ENCODE measurements at regions of chr22 and their contacts with region 1.

Region 1: GRCh38 chr22:50244420-50245213 is at the start of gene TUBGCP6:
- DNase-seq: peak; percentile 77 to 96 (median 91)
- ATAC-seq: peak; percentile 77
- H3K4me3 ChIP-seq: peak within 1 kb of the TSS; percentile 99
- H3K4me3 Mint-ChIP-seq: peak within 1 kb of the TSS; percentile 100
- H3K27ac ChIP-seq: peak within 1 kb of the TSS; percentile 94 to 99
- H3K27ac Mint-ChIP-seq: peak within 1 kb of the TSS; percentile 100
- H3K4me1 ChIP-seq: peaks cover 56% of the 10 kb centered on the region
- H3K4me1 Mint-ChIP-seq: peaks cover 51% of the 10 kb centered on the region
- H3K27me3 ChIP-seq: no peaks in the 10 kb centered on the region
- H3K27me3 Mint-ChIP-seq: no peaks in the 10 kb centered on the region
- CTCF ChIP-seq: peak; percentile 27
- total RNA-seq, gene TUBGCP6: 121 to 122 TPM

Region 2: DNA sequence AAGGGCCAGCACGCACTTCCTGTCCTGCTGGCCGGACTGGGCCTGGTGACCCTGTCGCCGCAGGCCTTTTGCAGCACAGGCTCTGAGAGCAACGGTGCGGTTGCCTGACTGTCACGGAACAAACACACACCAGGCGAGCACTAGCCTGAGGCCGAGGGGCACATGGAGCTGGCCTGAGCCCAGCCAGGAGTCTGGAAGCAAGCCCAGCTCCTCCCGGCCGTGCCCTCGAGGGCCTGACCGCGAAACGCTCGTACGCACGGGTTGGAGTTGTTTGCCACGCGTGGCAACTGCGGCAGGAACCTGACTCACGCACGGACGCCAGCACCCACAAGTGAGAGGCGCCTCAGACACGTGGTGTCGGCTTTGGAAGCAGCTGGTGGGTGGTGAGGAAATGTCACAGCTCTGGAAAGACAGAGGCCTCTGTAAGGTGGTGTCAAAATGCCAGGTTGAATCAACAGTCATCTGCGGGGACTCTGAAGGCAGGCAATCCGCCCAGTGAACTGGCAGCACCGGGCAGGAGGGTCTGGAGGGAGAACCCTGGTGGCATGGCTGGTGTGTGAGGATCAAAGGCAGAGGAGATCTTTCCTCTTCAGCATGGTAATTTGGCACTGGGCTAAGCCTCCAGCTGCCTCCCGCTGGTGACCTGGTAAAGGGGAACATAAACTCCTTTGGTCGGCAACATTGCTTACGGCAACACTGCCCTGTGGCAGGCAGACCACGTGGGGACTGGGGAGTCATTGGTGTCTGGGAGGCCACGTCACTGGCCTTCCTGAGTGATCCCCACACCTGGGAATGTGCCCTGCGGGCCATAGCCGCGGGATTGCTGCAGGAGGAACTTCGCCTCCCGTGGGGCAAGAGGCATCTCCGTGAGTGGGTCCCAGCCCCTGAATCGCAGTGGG is 216.7 kb before region 1 on chr22:
- CTCF ChIA-PET with region 1: no interaction called
- POLR2A ChIA-PET with region 1: no interaction called
- intact Hi-C with region 1: no loop called
- DNase-seq: peak in 4 of 9 experiments; percentile 54 to 78 (median 74)
- ATAC-seq: peak; percentile 58
- H3K4me3 ChIP-seq: no peak overlapping the region
- H3K4me3 Mint-ChIP-seq: no peak overlapping the region
- H3K27ac ChIP-seq: no peak overlapping the region
- H3K27ac Mint-ChIP-seq: no peak overlapping the region
- H3K4me1 ChIP-seq: peaks cover 8% of the 10 kb centered on the region
- H3K4me1 Mint-ChIP-seq: peaks cover 3% of the 10 kb centered on the region
- H3K27me3 ChIP-seq: peaks cover 0 to 5% of the 10 kb centered on the region in 2 experiments
- H3K27me3 Mint-ChIP-seq: peaks cover 3% of the 10 kb centered on the region
- CTCF ChIP-seq: no peak

Region 3: DNA sequence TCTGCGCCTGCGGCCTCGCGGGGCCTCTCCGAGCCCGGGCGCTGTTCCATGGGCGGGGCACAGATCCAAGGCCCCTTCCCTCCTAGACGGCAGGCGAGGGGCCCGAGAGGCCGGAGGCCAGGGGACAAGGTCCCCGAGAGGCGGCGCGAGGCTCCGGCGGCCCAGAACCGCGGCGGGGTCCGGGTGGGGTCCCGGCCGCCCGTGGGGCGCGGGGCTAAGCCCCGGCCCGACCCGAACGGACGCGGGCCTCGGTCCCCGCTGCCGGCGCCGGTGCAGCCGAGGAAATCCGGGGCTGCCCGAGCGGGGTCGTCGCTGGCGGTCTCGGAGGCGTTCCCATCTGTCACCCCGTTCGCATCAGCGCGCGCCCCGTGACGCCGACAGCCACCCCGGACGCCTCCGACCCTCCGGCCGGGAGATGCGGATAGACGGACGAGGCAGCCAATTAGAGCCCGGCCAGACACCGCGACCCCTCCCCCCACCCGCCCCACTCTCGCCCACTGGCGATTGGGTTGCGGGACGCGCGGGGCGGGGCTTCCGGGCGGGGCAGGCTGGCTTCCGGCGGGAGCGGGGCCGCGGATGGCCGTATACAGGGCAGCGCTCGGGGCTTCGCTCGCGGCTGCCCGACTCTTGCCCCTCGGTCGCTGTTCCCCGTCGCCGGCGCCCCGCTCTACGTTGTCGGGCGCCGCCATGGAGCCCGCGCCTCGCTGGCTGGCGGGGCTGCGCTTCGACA is 44.0 kb before region 1 on chr22 and contains the start of gene SELENOO:
- CTCF ChIA-PET with region 1: no interaction called
- POLR2A ChIA-PET with region 1: interaction called, 3 read pairs
- intact Hi-C with region 1: loop called in 1 of 2 experiments (anchors 2 kb)
- DNase-seq: peak; percentile 86 to 95 (median 91)
- ATAC-seq: peak; percentile 88
- H3K4me3 ChIP-seq: peak within 1 kb of the TSS; percentile 51 to 68
- H3K4me3 Mint-ChIP-seq: peak within 1 kb of the TSS; percentile 86
- H3K27ac ChIP-seq: peak within 1 kb of the TSS; percentile 60 to 77
- H3K27ac Mint-ChIP-seq: peak within 1 kb of the TSS; percentile 84
- H3K4me1 ChIP-seq: peaks cover 17% of the 10 kb centered on the region
- H3K4me1 Mint-ChIP-seq: peaks cover 24% of the 10 kb centered on the region
- H3K27me3 ChIP-seq: no peaks in the 10 kb centered on the region
- H3K27me3 Mint-ChIP-seq: no peaks in the 10 kb centered on the region
- CTCF ChIP-seq: no peak
- total RNA-seq, gene SELENOO: 32.7 to 34.6 TPM

Region 4: DNA sequence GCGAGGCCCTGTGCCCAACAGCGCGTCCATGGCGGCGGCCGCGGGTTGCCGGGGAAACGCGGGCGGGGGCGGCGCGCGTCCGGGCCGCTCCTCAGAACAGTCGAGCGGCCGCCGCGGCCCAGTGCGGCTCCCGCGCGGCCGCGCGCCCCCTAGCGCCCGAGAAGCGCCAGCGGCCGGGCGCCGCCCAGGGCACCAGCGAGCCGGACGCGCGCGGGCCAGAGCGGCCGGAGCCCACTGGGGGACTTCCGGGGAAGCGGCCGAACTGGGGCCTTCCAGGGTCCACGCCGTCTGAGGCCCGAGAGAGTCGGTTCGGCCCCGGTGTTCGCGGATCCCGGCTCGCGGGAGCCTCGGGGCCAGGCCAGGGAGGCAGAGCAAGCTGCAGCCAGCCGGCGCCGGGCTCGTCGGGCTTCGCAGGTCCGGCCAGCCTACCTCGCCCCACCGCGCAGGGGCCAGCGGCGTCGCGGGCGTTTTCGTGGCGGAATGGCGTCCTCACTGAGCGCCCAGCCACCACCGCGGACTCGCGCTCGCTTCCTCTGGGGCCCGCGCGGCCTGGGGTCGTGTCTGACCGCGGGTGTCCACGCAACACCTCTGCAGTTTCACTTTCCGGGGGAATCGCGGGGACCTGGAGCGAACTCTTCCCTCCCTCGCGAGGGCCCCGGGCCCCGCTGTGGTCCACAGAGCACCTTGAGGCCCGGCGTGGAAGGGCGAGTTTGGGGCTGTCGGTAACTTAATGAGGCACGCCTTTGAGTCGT is 82.5 kb after region 1 on chr22 and contains the start of gene DENND6B:
- CTCF ChIA-PET with region 1: interaction called, 38 read pairs
- POLR2A ChIA-PET with region 1: interaction called, 4 read pairs
- intact Hi-C with region 1: loop called in 1 of 2 experiments (anchors 1 kb)
- DNase-seq: peak; percentile 34 to 85 (median 64)
- ATAC-seq: peak; percentile 94
- H3K4me3 ChIP-seq: peak within 1 kb of the TSS; percentile 45 to 69
- H3K4me3 Mint-ChIP-seq: peak within 1 kb of the TSS; percentile 83
- H3K27ac ChIP-seq: peak within 1 kb of the TSS; percentile 23 to 37
- H3K27ac Mint-ChIP-seq: peak within 1 kb of the TSS; percentile 84
- H3K4me1 ChIP-seq: peaks cover 10% of the 10 kb centered on the region
- H3K4me1 Mint-ChIP-seq: peaks cover 12% of the 10 kb centered on the region
- H3K27me3 ChIP-seq: no peaks in the 10 kb centered on the region
- H3K27me3 Mint-ChIP-seq: peaks cover 2% of the 10 kb centered on the region
- CTCF ChIP-seq: peak; percentile 65
- total RNA-seq, gene DENND6B: 3.0 to 3.1 TPM

Region 5: GRCh38 chr22:50498322-50498890 is 253.8 kb after region 1 on chr22:
- CTCF ChIA-PET with region 1: interaction called, 19 read pairs
- POLR2A ChIA-PET with region 1: interaction called, 3 read pairs
- intact Hi-C with region 1: loop called in 1 of 2 experiments (anchors 1 kb)
- DNase-seq: peak; percentile 41 to 84 (median 76)
- ATAC-seq: peak; percentile 99
- H3K4me3 ChIP-seq: no peak overlapping the region
- H3K4me3 Mint-ChIP-seq: no peak overlapping the region
- H3K27ac ChIP-seq: no peak overlapping the region
- H3K27ac Mint-ChIP-seq: no peak overlapping the region
- H3K4me1 ChIP-seq: no peaks in the 10 kb centered on the region
- H3K4me1 Mint-ChIP-seq: no peaks in the 10 kb centered on the region
- H3K27me3 ChIP-seq: no peaks in the 10 kb centered on the region
- H3K27me3 Mint-ChIP-seq: no peaks in the 10 kb centered on the region
- CTCF ChIP-seq: peak; percentile 63

Region 6: GRCh38 chr22:50582562-50583293 is 338.1 kb after region 1 on chr22 and contains the start of gene CHKB:
- CTCF ChIA-PET with region 1: no interaction called
- POLR2A ChIA-PET with region 1: no interaction called
- intact Hi-C with region 1: loop called in 1 of 2 experiments (anchors 2 kb)
- DNase-seq: peak; percentile 95 to 99 (median 98)
- ATAC-seq: peak; percentile 94
- H3K4me3 ChIP-seq: peak within 1 kb of the TSS; percentile 77 to 78
- H3K4me3 Mint-ChIP-seq: peak within 1 kb of the TSS; percentile 93
- H3K27ac ChIP-seq: peak within 1 kb of the TSS; percentile 93 to 94
- H3K27ac Mint-ChIP-seq: peak within 1 kb of the TSS; percentile 97
- H3K4me1 ChIP-seq: peaks cover 16% of the 10 kb centered on the region
- H3K4me1 Mint-ChIP-seq: peaks cover 30% of the 10 kb centered on the region
- H3K27me3 ChIP-seq: no peaks in the 10 kb centered on the region
- H3K27me3 Mint-ChIP-seq: no peaks in the 10 kb centered on the region
- CTCF ChIP-seq: no peak
- total RNA-seq, gene CHKB: 112 to 115 TPM

Measured in CD8-positive, alpha-beta T cell (primary cell).